Sigmoid colon (tissue), 7 donors: ENCODE measurements at regions of chr10 and their contacts with region 1.

Region 1: GRCh38 chr10:92087750-92088395 is 164.3 kb downstream of the BTAF1 start:
- DNase-seq: peak; percentile 78
- H3K4me3 ChIP-seq: no peak overlapping the region
- H3K27ac ChIP-seq: peak overlapping the region in 1 of 4 donors; percentile 41
- H3K4me1 ChIP-seq: peaks cover 0 to 24% (median 10%) of the 10 kb centered on the region in 4 donors
- H3K27me3 ChIP-seq: no peaks in the 10 kb centered on the region
- CTCF ChIP-seq: peak; percentile 73 to 84 (median 78)
- EP300 ChIP-seq: no peak
- POLR2A ChIP-seq: no peak

Region 2: GRCh38 chr10:91838199-91838598 is 249.7 kb before region 1 on chr10:
- intact Hi-C with region 1: no loop called
- DNase-seq: no peak
- H3K4me3 ChIP-seq: no peak overlapping the region
- H3K27ac ChIP-seq: no peak overlapping the region
- H3K4me1 ChIP-seq: no peaks in the 10 kb centered on the region
- H3K27me3 ChIP-seq: no peaks in the 10 kb centered on the region
- CTCF ChIP-seq: no peak
- EP300 ChIP-seq: no peak
- POLR2A ChIP-seq: no peak

Region 3: GRCh38 chr10:91919651-91920050 is 168.2 kb before region 1 on chr10:
- intact Hi-C with region 1: no loop called
- DNase-seq: no peak
- H3K4me3 ChIP-seq: no peak overlapping the region
- H3K27ac ChIP-seq: no peak overlapping the region
- H3K4me1 ChIP-seq: peaks cover 0 to 11% (median 4%) of the 10 kb centered on the region in 4 donors
- H3K27me3 ChIP-seq: no peaks in the 10 kb centered on the region
- CTCF ChIP-seq: no peak
- EP300 ChIP-seq: no peak
- POLR2A ChIP-seq: no peak

Region 4: GRCh38 chr10:92240289-92241157 is 152.7 kb after region 1 on chr10:
- intact Hi-C with region 1: loop called (anchors 5 kb)
- DNase-seq: peak; percentile 81
- H3K4me3 ChIP-seq: peak overlapping the region; percentile 72 to 82 (median 77)
- H3K27ac ChIP-seq: peak overlapping the region; percentile 88 to 94 (median 89)
- H3K4me1 ChIP-seq: peaks cover 0 to 56% (median 37%) of the 10 kb centered on the region in 4 donors
- H3K27me3 ChIP-seq: no peaks in the 10 kb centered on the region
- CTCF ChIP-seq: no peak
- EP300 ChIP-seq: no peak
- POLR2A ChIP-seq: peak in 1 of 2 donors; percentile 44

Region 5: DNA sequence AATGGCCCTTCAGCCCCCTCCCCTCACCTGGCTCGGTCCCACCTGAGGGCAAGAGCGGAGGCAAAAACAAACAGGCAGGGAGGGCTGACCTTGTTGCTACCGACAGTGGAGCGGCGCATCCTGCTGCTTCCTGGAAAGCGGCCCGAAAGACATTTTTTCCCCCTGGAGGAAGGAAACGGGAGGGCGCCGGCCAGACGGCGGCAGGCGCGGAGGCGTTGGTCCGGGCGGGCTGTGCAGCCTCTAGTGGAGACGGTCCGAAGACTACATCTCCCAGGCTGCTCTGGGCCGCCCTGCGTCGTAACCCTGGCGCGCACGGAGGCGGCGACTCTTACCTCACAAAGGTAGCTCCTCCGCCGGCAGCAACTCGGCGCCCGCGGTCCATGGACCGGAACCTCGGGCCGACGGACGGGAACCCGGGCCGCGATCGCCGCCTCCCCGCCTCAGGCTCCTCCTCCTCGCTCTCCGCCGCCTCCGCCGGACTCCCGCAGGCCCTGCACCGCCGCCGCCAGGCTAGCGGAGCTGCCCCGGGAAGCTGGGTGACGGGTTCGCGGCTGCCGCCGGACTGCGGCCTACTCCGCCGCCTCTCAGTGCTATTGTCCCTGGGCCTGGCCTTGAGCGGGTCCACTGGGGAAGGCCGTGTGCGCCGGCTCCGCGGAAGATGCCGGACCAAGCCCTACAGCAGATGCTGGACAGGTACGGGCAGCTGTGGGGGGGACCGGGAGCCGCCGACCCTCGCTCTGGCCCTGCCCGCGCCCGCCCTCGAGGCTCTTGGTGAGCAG is 203.2 kb after region 1 on chr10 and contains the starts of genes CPEB3 and MARCHF5:
- intact Hi-C with region 1: loop called (anchors 2 kb)
- DNase-seq: peak; percentile 98
- H3K4me3 ChIP-seq: peak within 1 kb of the TSS; percentile 58 to 99 (median 86)
- H3K27ac ChIP-seq: peak within 1 kb of the TSS; percentile 82 to 99 (median 94)
- H3K4me1 ChIP-seq: peaks cover 0 to 17% (median 15%) of the 10 kb centered on the region in 4 donors
- H3K27me3 ChIP-seq: no peaks in the 10 kb centered on the region
- CTCF ChIP-seq: peak; percentile 77 to 95 (median 86)
- EP300 ChIP-seq: no peak
- POLR2A ChIP-seq: peak; percentile 66 to 72
- total RNA-seq, gene CPEB3: 6.6 to 7.7 (median 7.3) TPM
- total RNA-seq, gene MARCHF5: 9.5 to 23.5 (median 16.7) TPM

Region 6: GRCh38 chr10:92434385-92434784 is 346.5 kb after region 1 on chr10:
- intact Hi-C with region 1: loop called (anchors 1 kb)
- DNase-seq: no peak
- H3K4me3 ChIP-seq: no peak overlapping the region
- H3K27ac ChIP-seq: no peak overlapping the region
- H3K4me1 ChIP-seq: no peaks in the 10 kb centered on the region
- H3K27me3 ChIP-seq: no peaks in the 10 kb centered on the region
- CTCF ChIP-seq: no peak
- EP300 ChIP-seq: no peak
- POLR2A ChIP-seq: no peak